ENCODE measurements at regions of chr13 and their contacts with region 1.

Region 1: DNA sequence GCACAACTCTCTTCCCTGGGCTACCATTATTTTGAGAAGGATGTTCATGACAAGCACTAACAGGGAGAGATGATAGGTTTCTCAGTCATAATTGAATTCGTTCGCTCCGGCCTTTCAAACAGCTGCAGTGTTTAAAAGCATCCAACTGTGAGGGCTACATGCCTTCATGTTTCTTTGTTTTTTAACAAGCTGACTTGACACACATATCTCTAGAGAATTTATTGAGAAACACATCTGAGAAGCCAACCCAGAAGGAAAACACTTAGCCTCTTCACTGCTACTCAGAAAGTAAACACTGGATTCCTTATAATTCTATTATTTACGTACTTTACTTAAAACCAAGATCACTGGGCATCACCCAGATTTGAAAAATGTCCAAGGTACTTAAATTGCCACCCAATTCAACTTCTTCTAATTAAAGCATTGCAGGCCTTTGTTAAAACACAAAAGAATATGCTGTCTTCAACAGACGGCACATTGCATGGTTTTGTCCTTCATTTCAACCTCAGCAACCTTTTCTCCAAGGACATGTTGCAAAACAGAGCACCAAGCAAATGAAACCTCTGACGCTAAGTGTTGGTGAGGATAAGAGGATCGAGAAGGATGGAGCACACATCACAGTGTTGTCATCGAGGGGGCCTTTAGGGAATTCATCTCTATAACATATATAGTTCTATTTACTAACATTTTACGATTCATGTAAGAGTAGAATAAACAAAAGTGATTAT is 75.8 kb downstream of the TBC1D4 start:
- DNase-seq: no peak
- H3K4me3 ChIP-seq: no peak overlapping the region
- H3K27ac ChIP-seq: peak overlapping the region in 1 of 4 donors; percentile 13
- H3K4me1 ChIP-seq: no peaks in the 10 kb centered on the region
- H3K27me3 ChIP-seq: no peaks in the 10 kb centered on the region
- CTCF ChIP-seq: no peak
- EP300 ChIP-seq: no peak
- POLR2A ChIP-seq: no peak

Region 2: DNA sequence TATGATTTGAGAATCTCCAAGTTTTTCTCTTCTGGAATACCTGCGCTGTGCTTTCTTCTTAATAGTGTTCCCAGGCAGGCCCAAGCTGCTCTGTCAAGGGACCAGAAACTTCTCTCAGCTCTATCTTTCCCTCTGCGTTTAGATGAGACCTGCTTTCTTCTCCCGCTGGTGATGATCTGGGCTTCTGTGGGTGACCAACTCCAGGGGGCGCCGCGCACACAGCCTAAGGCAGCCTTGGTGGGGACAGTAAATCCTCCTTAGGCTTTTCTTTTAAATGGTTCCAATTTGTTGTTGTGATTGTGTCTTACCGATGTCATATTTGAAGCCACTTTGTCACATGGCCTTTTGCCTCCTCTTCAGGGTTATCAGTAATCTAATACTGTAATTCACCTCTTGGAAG is 832.5 kb before region 1 on chr13:
- in situ Hi-C with region 1: no loop called
- intact Hi-C with region 1: loop called (anchors 5 kb)
- DNase-seq: no peak
- H3K4me3 ChIP-seq: no peak overlapping the region
- H3K27ac ChIP-seq: no peak overlapping the region
- H3K4me1 ChIP-seq: peaks cover 0 to 10% (median 5%) of the 10 kb centered on the region in 4 donors
- H3K27me3 ChIP-seq: peaks cover 15% of the 10 kb centered on the region
- CTCF ChIP-seq: no peak
- EP300 ChIP-seq: no peak
- POLR2A ChIP-seq: no peak

Region 3: GRCh38 chr13:74770361-74770760 is 635.8 kb before region 1 on chr13:
- in situ Hi-C with region 1: no loop called
- intact Hi-C with region 1: no loop called
- DNase-seq: no peak
- H3K4me3 ChIP-seq: no peak overlapping the region
- H3K27ac ChIP-seq: no peak overlapping the region
- H3K4me1 ChIP-seq: no peaks in the 10 kb centered on the region
- H3K27me3 ChIP-seq: no peaks in the 10 kb centered on the region
- CTCF ChIP-seq: no peak
- EP300 ChIP-seq: no peak
- POLR2A ChIP-seq: no peak

Measured in transverse colon (tissue), 4 donors.